ENCODE measurements at regions of chr1 and their contacts with region 1.

Region 1: GRCh38 chr1:160219062-160219929 is 14.1 kb downstream of the PEA15 start:
- DNase-seq: no peak
- H3K4me3 ChIP-seq: no peak overlapping the region
- H3K27ac ChIP-seq: no peak overlapping the region
- H3K4me1 ChIP-seq: no peaks in the 10 kb centered on the region
- H3K27me3 ChIP-seq: no peaks in the 10 kb centered on the region
- CTCF ChIP-seq: peak; percentile 35 to 66 (median 48)
- EP300 ChIP-seq: no peak
- POLR2A ChIP-seq: no peak
- RAD21 ChIP-seq: peak; percentile 66 to 80

Region 2: DNA sequence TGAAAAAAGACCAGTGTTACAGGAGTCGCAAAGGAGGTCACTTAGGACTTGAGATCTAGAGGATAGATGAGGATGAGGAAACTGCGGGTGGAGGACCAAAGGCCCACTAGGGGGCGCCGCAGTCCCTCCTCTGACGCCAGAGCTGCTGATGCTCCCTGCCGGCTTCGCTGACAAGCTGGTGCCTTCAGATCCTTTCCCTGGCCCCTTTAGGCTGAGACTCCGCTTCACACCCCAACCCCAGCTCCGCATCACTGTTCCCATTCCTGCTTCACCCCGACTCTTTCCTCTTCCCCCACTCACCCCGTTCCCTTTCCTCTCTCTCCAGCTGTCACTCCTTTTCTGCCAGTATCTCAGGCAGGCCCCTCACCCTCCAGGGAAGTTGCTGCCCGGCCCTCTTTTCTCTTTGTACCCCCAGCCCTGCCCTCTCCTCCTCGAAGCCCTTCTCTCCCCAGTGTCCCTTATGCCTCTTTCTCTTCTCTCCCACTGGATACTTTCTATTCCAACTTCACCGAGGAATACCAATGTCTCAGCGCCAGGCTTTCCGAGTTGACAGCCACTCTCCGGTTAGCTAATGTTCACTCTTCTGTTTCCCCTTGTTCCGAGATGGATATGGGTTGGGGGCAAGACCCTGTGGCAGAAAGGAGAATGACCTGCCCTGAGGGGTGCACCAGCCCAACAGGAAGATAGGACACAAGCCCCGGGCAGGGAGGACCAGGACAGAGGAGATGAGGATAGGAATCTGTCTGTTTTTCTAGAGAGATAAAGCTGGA is 133.4 kb before region 1 on chr1:
- CTCF ChIA-PET with region 1: interaction called, 15 read pairs
- POLR2A ChIA-PET with region 1: no interaction called
- DNase-seq: peak; percentile 88 to 96
- H3K4me3 ChIP-seq: no peak overlapping the region
- H3K27ac ChIP-seq: no peak overlapping the region
- H3K4me1 ChIP-seq: peaks cover 0 to 5% (median 3%) of the 10 kb centered on the region in 4 experiments; a peak in 4 of 7 replicates
- H3K27me3 ChIP-seq: peaks cover 0 to 35% (median 27%) of the 10 kb centered on the region in 4 experiments; a peak in 6 of 7 replicates
- CTCF ChIP-seq: peak; percentile 91 to 99 (median 95)
- EP300 ChIP-seq: no peak
- POLR2A ChIP-seq: no peak
- RAD21 ChIP-seq: peak; percentile 83 to 88

Region 3: GRCh38 chr1:160117709-160118183 is 101.5 kb before region 1 on chr1:
- CTCF ChIA-PET with region 1: interaction called, 10 read pairs
- POLR2A ChIA-PET with region 1: interaction called, 3 read pairs
- DNase-seq: no peak
- H3K4me3 ChIP-seq: peak overlapping the region in 1 of 4 experiments; percentile 59; a peak in 3 of 8 replicates
- H3K27ac ChIP-seq: no peak overlapping the region
- H3K4me1 ChIP-seq: peaks cover 15 to 44% (median 32%) of the 10 kb centered on the region in 4 experiments
- H3K27me3 ChIP-seq: no peaks in the 10 kb centered on the region; a peak in 1 of 7 replicates
- CTCF ChIP-seq: no peak
- EP300 ChIP-seq: no peak
- POLR2A ChIP-seq: no peak
- RAD21 ChIP-seq: no peak

Region 4: DNA sequence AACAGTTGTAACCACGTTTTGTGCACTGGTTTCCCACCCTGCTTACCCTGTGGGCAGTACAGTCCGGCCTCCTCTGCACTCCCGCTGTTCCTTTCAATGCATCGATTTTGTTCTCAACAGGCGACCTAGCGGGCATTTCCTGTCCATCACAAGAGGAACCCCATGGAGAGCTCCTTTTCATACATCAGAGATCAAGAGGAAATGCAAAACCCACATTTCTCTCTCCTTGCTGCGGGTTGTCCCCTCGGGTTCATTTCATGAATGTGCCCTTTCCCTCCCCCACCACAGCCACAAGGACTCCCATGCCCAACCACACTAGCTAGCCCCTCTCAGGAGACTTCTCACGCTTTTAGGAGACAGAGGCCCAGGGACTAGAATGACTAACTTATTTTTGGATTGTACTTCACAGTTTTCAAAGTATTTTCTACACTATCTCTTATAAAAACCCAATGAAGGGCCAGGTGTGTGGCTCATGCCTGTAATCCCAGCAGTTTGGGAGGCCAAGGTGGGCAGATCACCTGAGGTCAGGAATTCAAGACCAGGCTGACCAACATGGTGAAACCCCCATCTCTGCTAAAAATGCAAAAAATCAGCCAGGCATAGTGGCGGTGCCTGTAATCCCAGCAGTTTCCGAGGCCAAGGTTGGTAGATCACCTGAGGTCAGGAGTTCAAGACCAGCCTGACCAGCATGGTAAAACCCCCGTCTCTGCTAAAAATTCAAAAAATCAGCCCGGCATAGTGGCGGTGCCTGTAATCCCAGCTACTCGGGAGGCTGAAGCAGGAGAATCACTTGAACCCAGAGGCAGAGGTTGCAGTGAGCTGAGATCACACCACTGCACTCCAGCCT is 49.5 kb before region 1 on chr1:
- CTCF ChIA-PET with region 1: interaction called, 257 read pairs
- POLR2A ChIA-PET with region 1: interaction called, 13 read pairs
- DNase-seq: peak; percentile 79 to 86
- H3K4me3 ChIP-seq: peak overlapping the region in 3 of 4 experiments; percentile 7 to 50 (median 13); a peak in 5 of 8 replicates
- H3K27ac ChIP-seq: peak overlapping the region; percentile 46; the same call in 1 of the 2 replicates
- H3K4me1 ChIP-seq: peaks cover 12 to 28% (median 22%) of the 10 kb centered on the region in 4 experiments; a peak in 6 of 7 replicates
- H3K27me3 ChIP-seq: peaks cover 0 to 2% (median under 1%) of the 10 kb centered on the region in 4 experiments; a peak in 2 of 7 replicates
- CTCF ChIP-seq: no peak
- EP300 ChIP-seq: peak in 1 of 2 experiments; percentile 96; a peak in 2 of 3 replicates
- POLR2A ChIP-seq: no peak
- RAD21 ChIP-seq: no peak

Region 5: GRCh38 chr1:160205242-160206035 is 13.9 kb before region 1 on chr1 and contains the start of gene PEA15:
- CTCF ChIA-PET with region 1: interaction called, 105 read pairs
- POLR2A ChIA-PET with region 1: interaction called, 44 read pairs
- DNase-seq: peak in 1 of 2 experiments; percentile 82
- H3K4me3 ChIP-seq: peak within 1 kb of the TSS; percentile 70 to 99 (median 86)
- H3K27ac ChIP-seq: peak within 1 kb of the TSS; percentile 75; the same call in 1 of the 2 replicates
- H3K4me1 ChIP-seq: peaks cover 13 to 35% (median 20%) of the 10 kb centered on the region in 4 experiments
- H3K27me3 ChIP-seq: no peaks in the 10 kb centered on the region
- CTCF ChIP-seq: no peak
- EP300 ChIP-seq: no peak
- POLR2A ChIP-seq: peak in 1 of 2 experiments; percentile 48; a peak in 2 of 3 replicates
- RAD21 ChIP-seq: no peak
- total RNA-seq, gene PEA15: 75.1 and 78.8 TPM in 2 replicates

Region 6: GRCh38 chr1:160251687-160252526 is 32.6 kb after region 1 on chr1:
- CTCF ChIA-PET with region 1: interaction called, 46 read pairs
- POLR2A ChIA-PET with region 1: interaction called, 4 read pairs
- DNase-seq: no peak
- H3K4me3 ChIP-seq: no peak overlapping the region
- H3K27ac ChIP-seq: no peak overlapping the region
- H3K4me1 ChIP-seq: no peaks in the 10 kb centered on the region; a peak in 1 of 7 replicates
- H3K27me3 ChIP-seq: no peaks in the 10 kb centered on the region
- CTCF ChIP-seq: peak in 2 of 3 experiments; percentile 76 to 78; a peak in 3 of 4 replicates
- EP300 ChIP-seq: no peak
- POLR2A ChIP-seq: no peak
- RAD21 ChIP-seq: peak; percentile 84 to 91